Esophagus muscularis mucosa (tissue), 4 donors: ENCODE measurements at regions of chr2 and their contacts with region 1.

Region 1: DNA sequence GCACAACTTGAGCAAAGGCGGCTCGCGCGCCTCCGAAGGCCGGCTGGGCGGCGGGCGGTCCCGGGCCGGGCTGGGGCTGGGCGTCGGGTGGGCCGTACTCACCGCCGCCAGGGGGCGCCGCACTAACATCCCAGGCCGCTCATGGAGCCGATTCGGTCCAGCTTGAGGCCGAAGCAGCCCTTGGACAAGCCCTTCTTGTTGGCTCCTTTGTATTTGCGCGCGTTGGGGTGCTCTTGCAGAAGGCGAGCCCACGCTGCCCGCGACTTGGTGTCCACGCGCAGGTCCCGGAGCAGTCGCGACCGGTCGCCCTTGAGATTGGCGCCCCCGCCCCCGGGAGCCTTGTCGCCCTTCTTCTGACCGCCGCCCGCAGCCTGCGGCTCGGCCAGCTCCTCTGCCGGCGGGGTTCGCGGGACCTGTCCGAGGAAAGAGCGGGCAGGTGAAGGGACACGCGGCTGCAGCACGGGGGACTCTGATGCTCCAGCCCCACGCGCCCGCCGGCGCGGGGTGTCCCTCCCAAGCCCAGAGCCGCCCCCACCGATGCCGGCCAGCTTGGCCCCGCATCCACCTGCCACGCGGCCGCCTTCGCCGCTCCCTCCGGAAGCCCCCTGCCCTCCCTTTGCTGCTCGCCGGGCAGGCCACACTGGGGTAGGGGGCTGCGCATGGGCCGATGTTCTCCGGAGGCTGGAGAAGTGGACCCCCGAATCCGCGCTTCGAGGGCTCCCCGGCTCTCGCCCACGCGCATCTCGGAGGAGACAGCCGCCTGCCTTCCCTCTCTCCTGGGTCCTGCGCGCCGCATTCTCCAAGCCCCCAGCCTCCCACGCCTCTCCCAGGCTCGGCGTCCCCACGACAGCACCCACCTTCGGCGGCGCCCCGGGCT is 655 bp downstream of the NPPC start:
- DNase-seq: no peak
- H3K4me3 ChIP-seq: peak overlapping the region; percentile 46 to 62 (median 52)
- H3K27ac ChIP-seq: no peak overlapping the region
- H3K4me1 ChIP-seq: peaks cover 18 to 40% (median 32%) of the 10 kb centered on the region in 4 donors
- H3K27me3 ChIP-seq: peaks cover 4 to 94% (median 20%) of the 10 kb centered on the region in 4 donors
- CTCF ChIP-seq: peak; percentile 85 to 95 (median 94)
- EP300 ChIP-seq: no peak
- POLR2A ChIP-seq: no peak

Region 2: GRCh38 chr2:231632559-231633142 is 292.9 kb before region 1 on chr2:
- intact Hi-C with region 1: no loop called
- DNase-seq: no peak
- H3K4me3 ChIP-seq: no peak overlapping the region
- H3K27ac ChIP-seq: peak overlapping the region in 3 of 4 donors; percentile 15 to 48 (median 41)
- H3K4me1 ChIP-seq: peaks cover 0 to 31% (median 17%) of the 10 kb centered on the region in 4 donors
- H3K27me3 ChIP-seq: no peaks in the 10 kb centered on the region
- CTCF ChIP-seq: no peak
- EP300 ChIP-seq: no peak
- POLR2A ChIP-seq: no peak

Region 3: GRCh38 chr2:232142049-232142448 is 216.5 kb after region 1 on chr2:
- intact Hi-C with region 1: loop called (anchors 5 kb)
- DNase-seq: no peak
- H3K4me3 ChIP-seq: no peak overlapping the region
- H3K27ac ChIP-seq: no peak overlapping the region
- H3K4me1 ChIP-seq: no peaks in the 10 kb centered on the region
- H3K27me3 ChIP-seq: no peaks in the 10 kb centered on the region
- CTCF ChIP-seq: peak; percentile 56 to 59 (median 58)
- EP300 ChIP-seq: no peak
- POLR2A ChIP-seq: no peak

Region 4: DNA sequence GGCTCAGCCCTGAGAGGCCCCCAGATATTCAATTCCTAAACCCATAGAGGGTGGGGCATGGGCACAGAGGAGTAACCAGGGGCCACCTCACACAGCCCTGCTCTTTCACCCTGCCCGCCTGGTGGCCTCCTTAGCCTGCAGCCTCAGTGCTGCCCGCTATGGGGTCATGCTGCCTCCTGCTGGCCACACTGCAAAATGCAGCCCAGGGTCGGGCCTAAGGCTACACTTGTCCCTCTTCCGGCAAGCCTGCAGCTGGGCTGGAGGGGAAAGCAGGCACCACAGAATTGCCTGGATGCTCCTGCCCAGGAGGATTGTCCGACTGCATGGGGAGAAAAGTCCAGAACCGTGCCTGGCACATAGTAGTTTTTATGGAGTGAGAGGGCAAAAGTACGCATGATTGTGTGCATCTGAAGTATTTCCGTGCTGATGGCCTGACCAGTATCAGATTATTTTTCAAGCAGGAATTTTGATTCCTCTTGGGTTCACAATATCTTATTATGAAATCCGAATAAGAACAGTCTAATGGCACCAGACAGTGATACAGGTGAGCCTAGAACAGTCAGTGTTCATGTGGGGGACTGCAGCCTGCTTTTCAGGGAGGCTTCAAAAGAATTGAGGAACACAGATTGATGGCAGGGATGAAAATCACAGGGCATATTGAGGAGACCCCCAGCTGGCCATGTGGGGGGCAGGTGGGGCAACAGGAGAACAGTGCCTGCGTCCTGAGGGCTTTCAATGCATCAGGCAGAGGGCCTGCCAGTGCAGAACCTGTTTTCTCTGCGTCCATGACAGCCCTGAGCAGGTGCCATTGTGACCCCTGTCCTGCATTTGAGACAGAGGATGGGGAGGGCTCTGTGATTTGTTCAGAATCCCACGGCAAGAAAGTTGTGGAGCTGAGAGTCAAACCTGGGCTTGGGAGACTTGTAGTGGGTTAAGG is 401.8 kb after region 1 on chr2:
- intact Hi-C with region 1: loop called (anchors 2 kb)
- DNase-seq: no peak
- H3K4me3 ChIP-seq: no peak overlapping the region
- H3K27ac ChIP-seq: no peak overlapping the region
- H3K4me1 ChIP-seq: peaks cover 0 to 13% (median 7%) of the 10 kb centered on the region in 4 donors
- H3K27me3 ChIP-seq: no peaks in the 10 kb centered on the region
- CTCF ChIP-seq: peak; percentile 66 to 82 (median 75)
- EP300 ChIP-seq: no peak
- POLR2A ChIP-seq: no peak

Region 5: GRCh38 chr2:232438951-232439757 is 513.6 kb after region 1 on chr2:
- intact Hi-C with region 1: loop called (anchors 5 kb)
- DNase-seq: no peak
- H3K4me3 ChIP-seq: no peak overlapping the region
- H3K27ac ChIP-seq: no peak overlapping the region
- H3K4me1 ChIP-seq: no peaks in the 10 kb centered on the region
- H3K27me3 ChIP-seq: peaks cover 0 to 8% (median 0%) of the 10 kb centered on the region in 4 donors
- CTCF ChIP-seq: peak; percentile 27 to 69 (median 33)
- EP300 ChIP-seq: no peak
- POLR2A ChIP-seq: no peak